ENCODE measurements at regions of chr4 and their contacts with region 1.

Region 1: DNA sequence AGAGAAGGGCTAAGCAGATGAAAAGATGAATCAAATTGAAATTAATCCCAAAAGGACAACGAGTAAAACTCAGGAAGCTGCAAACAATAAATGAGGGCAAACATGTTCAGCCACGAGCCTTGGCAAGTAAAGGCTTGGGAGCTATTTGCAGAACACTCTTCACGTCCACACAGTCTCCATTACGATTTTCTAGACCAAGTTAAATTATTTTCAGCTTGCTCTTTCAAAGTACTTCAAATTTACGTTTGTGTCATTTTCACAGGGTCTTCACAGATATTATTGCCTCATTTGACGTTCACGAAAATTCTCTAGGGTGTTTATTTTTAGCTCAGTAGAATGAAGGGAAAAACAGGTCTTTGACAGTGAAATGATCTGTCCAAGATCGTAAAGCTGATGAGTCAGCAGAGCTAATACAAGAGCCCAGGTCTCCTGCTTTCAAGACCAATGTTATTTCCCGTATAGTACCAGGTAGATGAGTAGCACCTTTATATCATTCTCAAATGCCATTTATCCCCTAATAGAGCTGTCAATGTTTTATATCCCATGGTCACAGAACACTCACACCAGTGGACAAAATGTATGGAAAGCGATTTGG is 20.9 kb downstream of the KLB start:
- DNase-seq: no peak
- ATAC-seq: no peak
- H3K4me3 ChIP-seq: no peak overlapping the region; a peak in 1 of 6 replicates
- H3K27ac ChIP-seq: peak overlapping the region; percentile 52
- H3K4me1 ChIP-seq: peaks cover 89% of the 10 kb centered on the region
- H3K27me3 ChIP-seq: no peaks in the 10 kb centered on the region
- CTCF ChIP-seq: no peak
- EP300 ChIP-seq: no peak
- POLR2A ChIP-seq: no peak
- RAD21 ChIP-seq: no peak

Region 2: GRCh38 chr4:39114436-39114835 is 313.2 kb before region 1 on chr4:
- CTCF ChIA-PET with region 1: no interaction called
- POLR2A ChIA-PET with region 1: no interaction called
- in situ Hi-C with region 1: no loop called
- intact Hi-C with region 1: no loop called
- DNase-seq: no peak
- ATAC-seq: no peak
- H3K4me3 ChIP-seq: no peak overlapping the region
- H3K27ac ChIP-seq: no peak overlapping the region
- H3K4me1 ChIP-seq: no peaks in the 10 kb centered on the region
- H3K27me3 ChIP-seq: no peaks in the 10 kb centered on the region
- CTCF ChIP-seq: no peak
- EP300 ChIP-seq: no peak
- POLR2A ChIP-seq: no peak
- RAD21 ChIP-seq: no peak

Region 3: DNA sequence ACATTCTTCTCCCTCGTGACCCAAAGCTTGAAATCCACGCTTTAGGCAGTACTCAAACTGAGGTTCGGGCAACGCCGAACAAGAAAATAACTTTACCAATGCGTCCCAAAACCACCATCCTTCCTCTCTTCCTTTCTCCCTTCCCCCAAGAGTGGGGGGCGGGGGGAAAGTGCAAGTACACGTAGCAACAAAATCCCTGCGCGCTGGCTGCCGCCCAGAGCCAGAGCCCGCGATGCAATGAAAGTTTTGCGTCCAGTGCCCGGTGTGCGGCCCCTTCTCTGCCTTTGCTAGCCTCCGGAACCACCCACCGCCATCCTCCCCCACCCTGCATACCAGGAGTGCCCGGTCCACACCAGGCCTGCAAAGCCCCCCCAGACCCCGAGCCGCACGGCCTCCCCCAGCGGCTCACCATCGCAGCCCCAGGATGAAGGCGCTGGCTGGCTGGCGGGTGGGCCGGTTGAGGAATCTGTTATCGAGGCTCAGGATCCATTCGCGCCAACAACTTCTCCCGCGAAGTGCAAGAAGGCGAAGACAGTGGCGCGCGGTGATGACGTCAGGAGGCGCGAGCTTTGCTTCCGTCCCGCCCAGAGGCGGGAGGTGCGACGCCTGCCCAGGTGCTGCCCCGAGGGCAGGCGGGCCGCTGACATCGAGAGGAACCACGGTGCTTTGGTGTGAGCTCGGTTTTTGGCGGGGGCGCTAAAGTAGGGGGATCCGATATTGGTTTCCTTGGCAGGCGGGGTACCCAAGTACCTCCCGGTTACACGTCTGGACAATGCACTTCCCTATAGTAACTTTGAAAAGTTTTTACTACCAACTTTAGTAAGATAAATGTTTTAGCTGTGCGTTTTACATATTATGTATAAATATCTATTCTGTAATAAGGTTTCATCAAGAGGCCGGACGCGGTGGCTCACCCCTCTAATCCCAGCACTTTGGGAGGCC is 61.5 kb before region 1 on chr4 and contains the start of gene RFC1:
- CTCF ChIA-PET with region 1: no interaction called
- POLR2A ChIA-PET with region 1: interaction called, 30 read pairs
- in situ Hi-C with region 1: no loop called
- intact Hi-C with region 1: no loop called
- DNase-seq: peak; percentile 87
- ATAC-seq: peak; percentile 81
- H3K4me3 ChIP-seq: peak within 1 kb of the TSS; percentile 76 to 85 (median 84)
- H3K27ac ChIP-seq: peak within 1 kb of the TSS; percentile 88
- H3K4me1 ChIP-seq: peaks cover 47% of the 10 kb centered on the region
- H3K27me3 ChIP-seq: no peaks in the 10 kb centered on the region; a peak in 1 of 5 replicates
- CTCF ChIP-seq: no peak; the same call in 1 of the 2 replicates
- EP300 ChIP-seq: no peak
- POLR2A ChIP-seq: peak; percentile 65 to 77
- RAD21 ChIP-seq: 0 out of 2 replicates have a peak, but pooled peaks have one; percentile 14
- total RNA-seq, gene RFC1: 78.8 and 118 TPM in 2 replicates

Region 4: GRCh38 chr4:39452860-39453587 is 25.4 kb after region 1 on chr4:
- CTCF ChIA-PET with region 1: no interaction called
- POLR2A ChIA-PET with region 1: interaction called, 42 read pairs
- in situ Hi-C with region 1: no loop called
- intact Hi-C with region 1: no loop called
- DNase-seq: no peak
- ATAC-seq: no peak
- H3K4me3 ChIP-seq: no peak overlapping the region
- H3K27ac ChIP-seq: no peak overlapping the region
- H3K4me1 ChIP-seq: peaks cover 82% of the 10 kb centered on the region
- H3K27me3 ChIP-seq: no peaks in the 10 kb centered on the region; a peak in 1 of 5 replicates
- CTCF ChIP-seq: no peak
- EP300 ChIP-seq: no peak
- POLR2A ChIP-seq: no peak; a peak in 1 of 4 replicates
- RAD21 ChIP-seq: no peak

Measured in HepG2 (cell line).